ENCODE measurements at regions of chr10 and their contacts with region 1.

Region 1: DNA sequence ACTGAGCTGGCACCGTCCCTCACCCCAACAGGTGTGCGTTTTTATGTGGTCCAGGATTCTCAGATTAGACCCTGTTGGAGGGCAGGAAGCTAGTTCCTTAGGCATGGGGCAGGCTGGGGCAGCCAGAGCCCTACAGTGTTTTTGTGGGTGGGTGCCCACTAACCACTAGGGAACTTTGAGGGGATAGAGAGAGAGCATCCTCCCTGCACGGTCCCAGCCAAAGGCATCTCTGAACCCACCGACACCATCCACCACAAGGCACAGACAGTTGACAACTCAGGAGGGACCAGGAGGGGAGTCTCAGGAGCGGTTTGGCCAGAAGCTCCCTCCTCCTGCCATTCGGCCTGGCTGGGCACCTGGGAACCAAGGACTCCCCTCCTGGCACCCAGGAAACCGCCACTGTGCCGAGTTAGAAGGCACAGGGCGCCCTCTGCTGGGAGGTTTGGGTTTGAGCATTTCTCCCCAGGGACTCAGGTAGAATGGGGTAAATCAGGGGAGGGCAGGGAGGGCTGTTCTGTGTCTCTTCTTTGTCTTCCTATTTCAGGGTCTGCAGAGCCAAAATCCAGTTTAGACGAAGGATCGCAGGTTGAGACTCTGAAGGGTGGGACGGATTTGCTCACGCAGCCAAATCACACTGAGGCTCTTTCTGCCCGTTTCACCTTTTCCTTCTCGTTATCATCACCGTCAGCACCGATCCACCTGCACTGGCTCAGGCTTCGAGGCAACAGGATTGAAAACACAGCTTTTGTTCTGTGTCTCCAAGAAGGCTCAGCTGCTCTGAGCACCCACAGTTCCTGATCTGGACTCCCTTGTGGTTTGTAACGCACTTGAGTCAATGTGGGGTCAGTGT is 84.8 kb upstream of the COL13A1 start:
- DNase-seq: peak; percentile 35
- ATAC-seq: peak; percentile 91
- H3K4me3 ChIP-seq: no peak overlapping the region
- H3K27ac ChIP-seq: no peak overlapping the region
- H3K4me1 ChIP-seq: no peaks in the 10 kb centered on the region
- H3K27me3 ChIP-seq: peaks cover 0 to 28% of the 10 kb centered on the region in 2 experiments; a peak in 3 of 5 replicates
- CTCF ChIP-seq: peak; percentile 86
- EP300 ChIP-seq: no peak
- POLR2A ChIP-seq: no peak
- RAD21 ChIP-seq: peak; percentile 82

Region 2: GRCh38 chr10:68720793-68721672 is 995.9 kb before region 1 on chr10 and contains the start of gene CCAR1:
- CTCF ChIA-PET with region 1: no interaction called
- POLR2A ChIA-PET with region 1: no interaction called
- in situ Hi-C with region 1: no loop called
- intact Hi-C with region 1: no loop called
- DNase-seq: peak; percentile 96
- ATAC-seq: peak; percentile 98
- H3K4me3 ChIP-seq: peak within 1 kb of the TSS; percentile 89 to 96 (median 93)
- H3K27ac ChIP-seq: peak within 1 kb of the TSS; percentile 94
- H3K4me1 ChIP-seq: peaks cover 8% of the 10 kb centered on the region
- H3K27me3 ChIP-seq: no peaks in the 10 kb centered on the region; a peak in 1 of 5 replicates
- CTCF ChIP-seq: no peak
- EP300 ChIP-seq: no peak
- POLR2A ChIP-seq: peak; percentile 78 to 83
- RAD21 ChIP-seq: no peak
- total RNA-seq, gene CCAR1: 81.6 and 104 TPM in 2 replicates

Region 3: GRCh38 chr10:69515699-69516259 is 201.2 kb before region 1 on chr10:
- CTCF ChIA-PET with region 1: interaction called, 5 read pairs
- POLR2A ChIA-PET with region 1: no interaction called
- in situ Hi-C with region 1: loop called (anchors 10 kb)
- intact Hi-C with region 1: loop called (anchors 2 kb)
- DNase-seq: peak; percentile 47
- ATAC-seq: peak; percentile 98
- H3K4me3 ChIP-seq: no peak overlapping the region
- H3K27ac ChIP-seq: no peak overlapping the region
- H3K4me1 ChIP-seq: no peaks in the 10 kb centered on the region
- H3K27me3 ChIP-seq: no peaks in the 10 kb centered on the region; a peak in 1 of 5 replicates
- CTCF ChIP-seq: peak; percentile 94
- EP300 ChIP-seq: no peak
- POLR2A ChIP-seq: no peak
- RAD21 ChIP-seq: peak; percentile 87

Region 4: GRCh38 chr10:69644658-69645295 is 72.2 kb before region 1 on chr10:
- CTCF ChIA-PET with region 1: interaction called, 25 read pairs
- POLR2A ChIA-PET with region 1: no interaction called
- in situ Hi-C with region 1: loop called (anchors 5 kb)
- intact Hi-C with region 1: loop called (anchors 1 kb)
- DNase-seq: peak; percentile 21
- ATAC-seq: peak; percentile 82
- H3K4me3 ChIP-seq: no peak overlapping the region
- H3K27ac ChIP-seq: no peak overlapping the region
- H3K4me1 ChIP-seq: no peaks in the 10 kb centered on the region
- H3K27me3 ChIP-seq: peaks cover 1 to 8% of the 10 kb centered on the region in 2 experiments; a peak in 3 of 5 replicates
- CTCF ChIP-seq: peak; percentile 85
- EP300 ChIP-seq: no peak
- POLR2A ChIP-seq: no peak
- RAD21 ChIP-seq: peak; percentile 79

Region 5: DNA sequence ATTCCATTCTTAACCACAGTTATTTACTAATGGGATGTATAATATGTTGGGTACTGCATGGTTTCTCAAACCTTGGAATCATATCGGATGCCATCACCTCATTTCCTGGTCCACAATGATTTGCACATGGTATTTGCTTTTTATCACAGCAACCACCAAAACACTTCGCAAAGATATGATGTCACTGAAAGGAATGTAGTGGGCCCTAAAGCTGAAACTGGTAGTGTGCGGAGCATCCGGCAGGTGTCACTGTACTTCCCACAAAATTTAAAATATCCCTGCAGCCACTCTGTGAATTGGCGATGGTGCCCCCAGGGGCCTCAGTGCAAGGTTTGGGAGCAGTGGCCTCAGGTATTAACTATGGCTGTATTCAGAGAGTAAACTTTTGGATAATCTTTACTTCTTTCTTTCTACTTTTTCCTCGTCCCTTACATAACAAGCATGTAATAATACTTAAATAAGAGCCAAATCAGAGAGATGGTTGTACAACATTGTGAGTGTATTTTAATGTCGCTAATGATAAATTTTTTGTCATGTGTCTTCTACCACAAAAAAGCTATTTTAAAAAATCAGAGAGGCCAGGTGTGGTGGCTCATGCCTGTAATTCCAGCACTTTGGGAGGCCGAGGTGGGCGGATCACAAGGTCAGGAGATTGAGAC is 20.7 kb before region 1 on chr10:
- CTCF ChIA-PET with region 1: interaction called, 11 read pairs
- POLR2A ChIA-PET with region 1: no interaction called
- in situ Hi-C with region 1: no loop called
- intact Hi-C with region 1: loop called (anchors 1 kb)
- DNase-seq: peak; percentile 70
- ATAC-seq: peak; percentile 90
- H3K4me3 ChIP-seq: no peak overlapping the region
- H3K27ac ChIP-seq: no peak overlapping the region
- H3K4me1 ChIP-seq: no peaks in the 10 kb centered on the region
- H3K27me3 ChIP-seq: no peaks in the 10 kb centered on the region; a peak in 1 of 5 replicates
- CTCF ChIP-seq: peak; percentile 65
- EP300 ChIP-seq: no peak
- POLR2A ChIP-seq: no peak
- RAD21 ChIP-seq: 0 out of 2 replicates have a peak, but pooled peaks have one; percentile 12

Measured in HepG2 (cell line).